Activated CD4-positive, alpha-beta T cell treated with anti-CD3 and anti-CD28 coated beads, Interleukin-2, amount 10 ng/mL, durations not matched to agents 24 days and 14 days (primary cell): ENCODE measurements at regions of chr5 and their contacts with region 1.

Region 1: GRCh38 chr5:123036391-123037103 is at the start of gene PPIC:
- DNase-seq: peak; percentile 63
- H3K4me3 Mint-ChIP-seq: peak within 1 kb of the TSS; percentile 60
- H3K27ac Mint-ChIP-seq: no peak within 1 kb of the TSS
- H3K4me1 Mint-ChIP-seq: peaks cover 7% of the 10 kb centered on the region
- H3K27me3 Mint-ChIP-seq: peaks cover 59% of the 10 kb centered on the region
- total RNA-seq, gene PPIC: not detected in 2 replicates

Region 2: DNA sequence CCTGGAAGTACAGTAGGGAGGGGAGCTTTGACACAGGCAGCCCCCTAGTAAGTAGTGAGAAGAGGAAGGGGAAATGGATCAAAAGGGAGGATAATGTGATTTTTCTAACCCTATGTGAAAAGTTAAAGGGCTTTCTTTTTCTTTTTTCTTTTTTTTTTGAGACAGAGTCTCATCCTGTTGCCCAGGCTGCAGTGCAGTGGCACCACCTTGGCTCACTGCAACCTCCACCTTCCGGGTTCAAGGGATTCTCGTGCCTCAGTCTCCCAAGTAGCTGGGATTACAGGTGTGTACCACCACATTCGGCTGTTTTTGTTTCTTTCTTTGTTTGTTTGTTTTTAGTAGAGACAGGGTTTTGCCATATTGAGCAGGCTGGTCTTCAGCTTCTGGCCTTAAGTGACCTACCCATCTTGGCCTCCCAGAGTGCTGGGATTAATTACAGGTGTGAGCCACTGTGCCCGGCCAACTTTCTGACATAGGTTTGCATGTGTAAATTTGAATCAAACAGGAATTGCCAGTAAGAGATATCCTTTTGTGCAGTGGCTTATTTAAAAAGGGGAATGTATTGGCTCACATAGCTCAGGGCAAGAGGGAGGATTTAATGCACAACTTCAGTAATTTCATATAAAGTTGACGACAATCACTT is 39.1 kb after region 1 on chr5:
- intact Hi-C with region 1: no loop called
- DNase-seq: peak; percentile 4
- H3K4me3 Mint-ChIP-seq: no peak overlapping the region
- H3K27ac Mint-ChIP-seq: no peak overlapping the region
- H3K4me1 Mint-ChIP-seq: no peaks in the 10 kb centered on the region
- H3K27me3 Mint-ChIP-seq: peaks cover 9% of the 10 kb centered on the region

Region 3: DNA sequence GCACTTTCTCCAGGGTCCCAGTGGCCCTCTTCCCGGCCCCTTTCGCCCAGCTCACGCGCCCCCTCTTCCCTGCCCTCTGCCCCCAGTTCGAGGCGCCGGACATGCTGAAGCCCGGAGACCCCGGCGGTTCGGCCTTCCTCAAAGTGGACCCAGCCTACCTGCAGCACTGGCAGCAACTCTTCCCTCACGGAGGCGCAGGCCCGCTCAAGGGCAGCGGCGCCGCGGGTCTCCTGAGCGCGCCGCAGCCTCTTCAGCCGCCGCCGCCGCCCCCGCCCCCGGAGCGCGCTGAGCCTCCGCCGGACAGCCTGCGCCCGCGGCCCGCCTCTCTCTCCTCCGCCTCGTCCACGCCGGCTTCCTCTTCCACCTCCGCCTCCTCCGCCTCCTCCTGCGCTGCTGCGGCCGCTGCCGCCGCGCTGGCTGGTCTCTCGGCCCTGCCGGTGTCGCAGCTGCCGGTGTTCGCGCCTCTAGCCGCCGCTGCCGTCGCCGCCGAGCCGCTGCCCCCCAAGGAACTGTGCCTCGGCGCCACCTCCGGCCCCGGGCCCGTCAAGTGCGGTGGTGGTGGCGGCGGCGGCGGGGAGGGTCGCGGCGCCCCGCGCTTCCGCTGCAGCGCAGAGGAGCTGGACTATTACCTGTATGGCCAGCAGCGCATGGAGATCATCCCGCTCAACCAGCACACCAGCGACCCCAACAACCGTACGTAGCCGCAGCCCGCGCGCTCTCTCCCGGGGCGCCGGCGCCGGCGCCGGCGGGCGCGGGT is 53.5 kb after region 1 on chr5:
- intact Hi-C with region 1: loop called (anchors 2 kb)
- DNase-seq: peak; percentile 53
- H3K4me3 Mint-ChIP-seq: no peak overlapping the region
- H3K27ac Mint-ChIP-seq: no peak overlapping the region
- H3K4me1 Mint-ChIP-seq: peaks cover 7% of the 10 kb centered on the region
- H3K27me3 Mint-ChIP-seq: peaks cover 74% of the 10 kb centered on the region

Region 4: GRCh38 chr5:123371575-123372179 is 335.1 kb after region 1 on chr5:
- intact Hi-C with region 1: no loop called
- DNase-seq: peak; percentile 61
- H3K4me3 Mint-ChIP-seq: no peak overlapping the region
- H3K27ac Mint-ChIP-seq: no peak overlapping the region
- H3K4me1 Mint-ChIP-seq: no peaks in the 10 kb centered on the region
- H3K27me3 Mint-ChIP-seq: no peaks in the 10 kb centered on the region